BJ (cell line): ENCODE measurements at regions of chr3 and their contacts with region 1.

Region 1: DNA sequence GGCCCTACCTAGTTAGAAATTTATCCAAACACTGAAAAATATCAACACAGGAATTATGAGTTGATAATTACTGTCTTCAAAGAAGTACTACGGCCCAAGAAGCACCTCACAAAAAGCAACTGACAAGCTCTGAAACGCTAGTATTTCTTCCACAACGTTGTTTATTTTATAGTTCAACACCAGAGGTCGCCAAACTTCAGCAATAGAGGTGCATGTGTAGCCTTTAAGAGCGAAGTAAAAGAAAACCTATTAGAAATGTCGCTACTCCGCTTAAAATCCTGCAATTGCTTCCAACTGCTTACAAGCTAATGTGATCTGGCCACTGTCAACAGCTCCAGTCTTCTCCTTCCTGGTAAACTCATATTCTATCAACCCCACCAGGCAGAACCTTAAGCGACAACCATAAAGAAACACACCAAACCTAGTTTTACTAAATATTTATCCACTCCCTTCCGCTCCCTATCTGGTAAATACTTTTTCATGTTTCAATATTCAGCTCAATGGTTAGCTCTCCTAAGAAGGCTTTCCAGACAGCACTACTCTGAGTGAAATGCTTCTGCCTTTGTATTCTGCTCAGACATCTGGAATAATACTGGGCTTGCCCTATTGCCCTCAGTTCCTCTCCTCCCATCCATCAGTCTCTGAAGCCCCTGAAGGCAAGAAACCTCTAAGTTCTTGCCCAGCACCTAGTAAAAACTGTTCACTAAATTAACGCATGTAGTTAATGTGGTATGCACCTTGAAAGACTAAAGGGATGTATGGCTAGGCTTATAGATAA is 110.2 kb downstream of the NR1I2 start:
- DNase-seq: peak; percentile 20
- H3K4me3 ChIP-seq: no peak overlapping the region
- H3K27me3 ChIP-seq: no peaks in the 10 kb centered on the region
- CTCF ChIP-seq: peak; percentile 68

Region 2: GRCh38 chr3:119781330-119782198 is 110.6 kb before region 1 on chr3 and contains the start of gene NR1I2:
- CTCF ChIA-PET with region 1: no interaction called
- POLR2A ChIA-PET with region 1: no interaction called
- DNase-seq: no peak
- H3K4me3 ChIP-seq: no peak within 1 kb of the TSS
- H3K27me3 ChIP-seq: no peaks in the 10 kb centered on the region
- CTCF ChIP-seq: no peak
- polyA plus RNA-seq, gene NR1I2: not detected in 2 replicates

Region 3: GRCh38 chr3:120177151-120177550 is 285.0 kb after region 1 on chr3:
- CTCF ChIA-PET with region 1: interaction called, 42 read pairs
- POLR2A ChIA-PET with region 1: no interaction called
- DNase-seq: peak; percentile 66
- H3K4me3 ChIP-seq: no peak overlapping the region
- H3K27me3 ChIP-seq: no peaks in the 10 kb centered on the region
- CTCF ChIP-seq: peak; percentile 33; the same call in 1 of the 2 replicates

Region 4: GRCh38 chr3:120182724-120183524 is 290.8 kb after region 1 on chr3:
- CTCF ChIA-PET with region 1: interaction called, 42 read pairs
- POLR2A ChIA-PET with region 1: no interaction called
- DNase-seq: no peak
- H3K4me3 ChIP-seq: no peak overlapping the region
- H3K27me3 ChIP-seq: no peaks in the 10 kb centered on the region
- CTCF ChIP-seq: peak; percentile 48